Activated B cell treated with CpG ODN at 0.5 μM for 24 hours (primary cell): ENCODE measurements at regions of chr1 and their contacts with region 1.

Region 1: GRCh38 chr1:226109829-226110248 is 47.3 kb downstream of the H3-3A start:
- DNase-seq: peak; percentile 90
- ATAC-seq: peak; percentile 66
- H3K4me3 Mint-ChIP-seq: peak overlapping the region; percentile 91
- H3K27ac Mint-ChIP-seq: peak overlapping the region; percentile 93
- H3K4me1 Mint-ChIP-seq: peaks cover 42% of the 10 kb centered on the region
- H3K27me3 Mint-ChIP-seq: no peaks in the 10 kb centered on the region
- CTCF ChIP-seq: no peak

Region 2: DNA sequence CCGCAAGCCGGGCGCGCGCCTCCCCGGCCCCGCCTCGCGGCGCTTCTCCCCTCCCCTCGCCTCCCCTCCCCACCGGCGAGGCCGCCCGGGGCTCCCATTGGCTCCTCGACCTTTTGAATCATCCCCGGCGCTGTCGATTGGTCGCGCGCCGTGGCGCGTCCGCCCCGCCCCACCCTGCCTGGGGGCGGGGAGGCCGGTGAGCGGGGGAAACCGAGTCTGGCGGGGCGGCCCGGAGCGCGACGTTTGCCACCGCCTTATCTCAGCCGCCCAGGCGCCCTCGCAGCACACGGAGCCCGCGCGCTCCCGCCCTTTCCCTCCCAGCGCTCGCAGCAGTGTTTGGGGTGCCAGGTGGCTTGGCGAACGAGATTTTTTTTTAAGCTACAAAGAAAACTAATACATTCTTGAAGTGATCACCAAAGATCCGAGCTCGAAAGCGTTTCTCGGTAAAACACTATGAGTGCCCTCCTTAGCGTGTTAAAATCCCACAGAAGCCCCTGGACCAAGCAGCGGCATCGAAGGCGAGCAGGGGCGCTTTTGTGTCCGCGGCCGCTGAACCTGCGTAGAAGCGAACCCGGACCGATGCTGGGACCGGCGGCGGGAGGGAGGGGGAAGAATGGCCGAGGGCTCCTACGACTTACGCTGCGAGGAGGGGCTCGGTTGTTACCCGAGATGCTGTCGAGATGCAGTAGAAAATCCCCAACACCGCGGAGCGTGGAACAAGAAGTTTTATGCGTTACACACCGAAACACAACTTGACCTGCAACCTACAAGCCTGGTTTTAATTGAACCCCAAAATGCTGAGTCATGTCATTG is 681.6 kb before region 1 on chr1:
- CTCF ChIA-PET with region 1: no interaction called
- POLR2A ChIA-PET with region 1: interaction called, 3 read pairs
- intact Hi-C with region 1: loop called (anchors 5 kb)
- DNase-seq: peak; percentile 88
- ATAC-seq: peak; percentile 92
- H3K4me3 Mint-ChIP-seq: peak overlapping the region; percentile 89
- H3K27ac Mint-ChIP-seq: peak overlapping the region; percentile 90
- H3K4me1 Mint-ChIP-seq: peaks cover 48% of the 10 kb centered on the region
- H3K27me3 Mint-ChIP-seq: no peaks in the 10 kb centered on the region
- CTCF ChIP-seq: no peak

Region 3: GRCh38 chr1:225710804-225711203 is 399.0 kb before region 1 on chr1:
- CTCF ChIA-PET with region 1: no interaction called
- POLR2A ChIA-PET with region 1: no interaction called
- intact Hi-C with region 1: no loop called
- DNase-seq: no peak
- ATAC-seq: no peak
- H3K4me3 Mint-ChIP-seq: no peak overlapping the region
- H3K27ac Mint-ChIP-seq: no peak overlapping the region
- H3K4me1 Mint-ChIP-seq: no peaks in the 10 kb centered on the region
- H3K27me3 Mint-ChIP-seq: no peaks in the 10 kb centered on the region
- CTCF ChIP-seq: no peak

Region 4: DNA sequence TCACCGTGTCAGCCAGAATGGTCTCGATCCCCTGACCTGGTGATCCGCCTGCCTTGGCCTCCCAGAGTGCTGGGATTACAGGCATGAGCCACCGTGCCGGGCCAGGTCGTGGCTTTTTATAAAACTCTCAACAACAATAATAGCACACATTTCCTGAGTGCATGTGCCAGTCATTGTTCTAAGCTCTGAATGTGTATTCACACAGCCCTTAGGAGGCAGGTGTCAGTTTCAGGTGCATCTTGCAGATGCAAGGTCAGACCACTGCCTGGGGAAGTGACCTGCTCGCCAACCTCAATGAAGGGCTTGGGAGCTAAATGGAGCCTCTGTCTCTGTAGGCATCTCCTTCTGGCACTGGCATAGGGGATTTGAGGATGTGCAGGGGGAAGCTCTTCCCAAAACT is 167.3 kb before region 1 on chr1:
- CTCF ChIA-PET with region 1: no interaction called
- POLR2A ChIA-PET with region 1: interaction called, 10 read pairs
- intact Hi-C with region 1: no loop called
- DNase-seq: no peak
- ATAC-seq: no peak
- H3K4me3 Mint-ChIP-seq: no peak overlapping the region
- H3K27ac Mint-ChIP-seq: no peak overlapping the region
- H3K4me1 Mint-ChIP-seq: peaks cover 9% of the 10 kb centered on the region
- H3K27me3 Mint-ChIP-seq: peaks cover 11% of the 10 kb centered on the region
- CTCF ChIP-seq: no peak

Region 5: GRCh38 chr1:226029093-226029496 is 80.7 kb before region 1 on chr1:
- CTCF ChIA-PET with region 1: no interaction called
- POLR2A ChIA-PET with region 1: interaction called, 7 read pairs
- intact Hi-C with region 1: loop called (anchors 1 kb)
- DNase-seq: peak; percentile 39
- ATAC-seq: peak; percentile 86
- H3K4me3 Mint-ChIP-seq: peak overlapping the region; percentile 68
- H3K27ac Mint-ChIP-seq: peak overlapping the region; percentile 94
- H3K4me1 Mint-ChIP-seq: peaks cover 45% of the 10 kb centered on the region
- H3K27me3 Mint-ChIP-seq: no peaks in the 10 kb centered on the region
- CTCF ChIP-seq: no peak

Region 6: DNA sequence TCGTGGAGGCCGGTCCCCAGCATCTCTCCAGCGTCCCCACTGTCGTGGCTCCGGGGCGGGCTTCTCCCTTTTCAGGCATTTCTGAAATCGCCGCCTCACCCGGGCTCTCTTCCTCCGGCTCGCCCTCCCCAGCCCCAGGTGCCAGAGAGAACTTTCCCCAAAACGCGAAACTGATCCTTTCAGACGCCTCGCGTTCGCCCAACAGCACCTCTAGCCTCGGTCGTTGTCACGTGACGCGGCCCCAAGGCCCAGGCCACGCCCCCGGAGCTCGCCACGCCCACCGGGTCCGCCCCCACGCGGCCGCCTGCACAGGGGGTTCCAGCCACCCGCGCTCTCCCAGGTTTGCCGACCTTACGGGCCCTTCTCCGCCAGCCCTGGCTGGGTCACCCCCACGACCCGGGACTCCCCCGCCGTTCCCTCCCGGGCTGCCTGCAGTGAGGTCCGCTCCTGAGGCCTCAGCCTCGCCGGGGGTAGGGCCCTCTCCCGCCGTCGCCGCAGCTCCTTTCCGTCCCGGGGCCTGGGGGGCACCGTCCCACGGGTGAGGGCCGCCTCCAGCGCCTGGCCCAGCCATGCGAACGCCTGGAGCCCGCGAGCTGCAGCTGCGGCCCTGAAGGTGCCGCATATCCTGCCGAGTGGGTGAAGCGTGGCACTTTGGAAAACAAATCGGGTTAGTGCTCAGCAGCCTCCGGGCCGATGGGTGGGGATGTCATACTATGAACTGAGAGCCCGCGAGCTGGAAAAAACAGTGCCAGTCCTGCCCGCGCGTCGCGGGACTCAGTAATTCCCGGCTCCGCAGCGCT is 26.3 kb before region 1 on chr1:
- CTCF ChIA-PET with region 1: interaction called, 6 read pairs
- POLR2A ChIA-PET with region 1: interaction called, 57 read pairs
- intact Hi-C with region 1: loop called (anchors 1 kb)
- DNase-seq: peak; percentile 99
- ATAC-seq: peak; percentile 91
- H3K4me3 Mint-ChIP-seq: peak overlapping the region; percentile 88
- H3K27ac Mint-ChIP-seq: peak overlapping the region; percentile 68
- H3K4me1 Mint-ChIP-seq: peaks cover 25% of the 10 kb centered on the region
- H3K27me3 Mint-ChIP-seq: no peaks in the 10 kb centered on the region
- CTCF ChIP-seq: no peak

Region 7: DNA sequence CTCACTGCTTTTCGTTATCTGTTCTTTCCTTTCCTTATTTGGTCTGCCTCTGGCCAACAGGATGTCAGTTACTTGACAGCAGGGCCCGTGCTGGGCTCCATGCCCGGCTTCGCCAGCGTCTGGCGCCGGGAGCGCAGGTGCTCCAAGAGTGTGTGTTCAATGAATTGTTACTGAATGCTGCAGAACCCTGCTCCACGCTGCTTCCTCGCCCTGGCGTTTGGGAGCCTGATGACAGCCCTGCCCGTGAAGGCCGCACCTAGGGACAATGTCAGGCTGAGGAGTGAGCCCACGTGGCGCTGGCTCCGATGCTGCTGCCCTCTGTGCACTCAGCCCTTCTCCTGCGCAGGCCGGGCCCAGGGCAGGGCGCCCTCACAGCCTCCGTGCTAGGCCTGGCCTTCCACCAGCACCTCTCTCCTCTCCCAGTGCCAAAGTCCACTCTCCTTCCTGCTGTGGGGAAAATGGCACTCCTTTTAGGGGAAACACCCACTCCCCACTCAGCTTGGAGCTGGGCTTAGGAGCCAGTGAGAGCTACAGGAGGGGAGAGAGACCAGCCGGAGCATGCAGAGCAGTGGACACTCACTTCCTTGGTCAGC is 25.3 kb after region 1 on chr1:
- CTCF ChIA-PET with region 1: no interaction called
- POLR2A ChIA-PET with region 1: interaction called, 18 read pairs
- intact Hi-C with region 1: no loop called
- DNase-seq: no peak
- ATAC-seq: no peak
- H3K4me3 Mint-ChIP-seq: no peak overlapping the region
- H3K27ac Mint-ChIP-seq: peak overlapping the region; percentile 96
- H3K4me1 Mint-ChIP-seq: peaks cover 54% of the 10 kb centered on the region
- H3K27me3 Mint-ChIP-seq: no peaks in the 10 kb centered on the region
- CTCF ChIP-seq: no peak

Region 8: GRCh38 chr1:227846260-227846858 is 1736.5 kb after region 1 on chr1:
- CTCF ChIA-PET with region 1: no interaction called
- POLR2A ChIA-PET with region 1: interaction called, 11 read pairs
- intact Hi-C with region 1: no loop called
- DNase-seq: no peak
- ATAC-seq: no peak
- H3K4me3 Mint-ChIP-seq: no peak overlapping the region
- H3K27ac Mint-ChIP-seq: no peak overlapping the region
- H3K4me1 Mint-ChIP-seq: no peaks in the 10 kb centered on the region
- H3K27me3 Mint-ChIP-seq: no peaks in the 10 kb centered on the region
- CTCF ChIP-seq: no peak